Prostate gland (tissue), 2 donors: ENCODE measurements at regions of chr1 and their contacts with region 1.

Region 1: DNA sequence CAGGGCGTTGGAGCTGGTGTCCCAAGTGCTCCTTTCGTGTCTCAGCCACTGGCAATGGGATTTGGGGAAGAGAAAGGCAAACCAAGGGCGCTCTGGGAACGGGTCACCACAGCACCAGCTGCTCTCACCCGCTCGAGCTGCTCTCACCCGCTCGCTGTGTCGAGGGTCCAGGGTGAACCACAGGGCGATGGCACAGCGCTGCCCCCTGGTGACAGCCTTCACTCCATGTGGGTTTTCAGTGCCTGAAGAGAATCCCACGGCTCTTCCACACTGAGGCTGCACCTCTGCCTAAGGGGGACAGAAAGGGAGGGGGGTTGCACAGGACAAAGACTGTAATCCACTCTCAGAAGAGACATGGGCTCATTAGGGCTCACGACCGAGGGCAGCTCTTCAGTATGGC is 7.1 kb upstream of the CLDN19 start:
- DNase-seq: no peak
- H3K4me3 ChIP-seq: no peak overlapping the region
- H3K27ac ChIP-seq: no peak overlapping the region
- H3K4me1 ChIP-seq: no peaks in the 10 kb centered on the region
- H3K27me3 ChIP-seq: no peaks in the 10 kb centered on the region
- CTCF ChIP-seq: peak in 3 of 4 experiments; percentile 57 to 75 (median 66)
- POLR2A ChIP-seq: no peak

Region 2: DNA sequence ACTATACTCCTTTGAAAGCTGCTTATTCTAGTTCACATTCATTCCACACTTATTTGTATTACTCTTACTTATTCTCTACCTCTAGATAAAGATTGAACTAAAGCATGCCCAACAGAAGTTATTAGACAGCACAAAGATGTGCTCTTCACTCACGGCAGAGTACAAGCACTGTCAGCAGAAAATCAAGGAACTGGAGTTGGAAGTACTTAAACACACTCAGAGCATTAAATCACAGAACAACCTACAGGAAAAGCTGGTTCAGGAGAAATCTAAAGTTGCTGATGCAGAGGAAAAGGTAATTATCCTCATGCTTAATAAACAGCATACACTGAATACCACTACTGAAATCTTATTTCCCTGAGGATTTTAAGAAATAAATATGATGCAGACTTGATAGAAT is 170.2 kb before region 1 on chr1:
- intact Hi-C with region 1: loop called (anchors 5 kb)
- DNase-seq: no peak
- H3K4me3 ChIP-seq: no peak overlapping the region
- H3K27ac ChIP-seq: no peak overlapping the region
- H3K4me1 ChIP-seq: no peaks in the 10 kb centered on the region
- H3K27me3 ChIP-seq: no peaks in the 10 kb centered on the region
- CTCF ChIP-seq: no peak
- POLR2A ChIP-seq: no peak